OCI-LY7 (cell line): ENCODE measurements at regions of chr5 and their contacts with region 1.

Region 1: GRCh38 chr5:119383008-119383407 is 27.2 kb downstream of the TNFAIP8 start:
- DNase-seq: no peak
- H3K4me3 ChIP-seq: no peak overlapping the region
- H3K27ac ChIP-seq: no peak overlapping the region
- H3K4me1 ChIP-seq: peaks cover 44% of the 10 kb centered on the region
- CTCF ChIP-seq: no peak

Region 2: DNA sequence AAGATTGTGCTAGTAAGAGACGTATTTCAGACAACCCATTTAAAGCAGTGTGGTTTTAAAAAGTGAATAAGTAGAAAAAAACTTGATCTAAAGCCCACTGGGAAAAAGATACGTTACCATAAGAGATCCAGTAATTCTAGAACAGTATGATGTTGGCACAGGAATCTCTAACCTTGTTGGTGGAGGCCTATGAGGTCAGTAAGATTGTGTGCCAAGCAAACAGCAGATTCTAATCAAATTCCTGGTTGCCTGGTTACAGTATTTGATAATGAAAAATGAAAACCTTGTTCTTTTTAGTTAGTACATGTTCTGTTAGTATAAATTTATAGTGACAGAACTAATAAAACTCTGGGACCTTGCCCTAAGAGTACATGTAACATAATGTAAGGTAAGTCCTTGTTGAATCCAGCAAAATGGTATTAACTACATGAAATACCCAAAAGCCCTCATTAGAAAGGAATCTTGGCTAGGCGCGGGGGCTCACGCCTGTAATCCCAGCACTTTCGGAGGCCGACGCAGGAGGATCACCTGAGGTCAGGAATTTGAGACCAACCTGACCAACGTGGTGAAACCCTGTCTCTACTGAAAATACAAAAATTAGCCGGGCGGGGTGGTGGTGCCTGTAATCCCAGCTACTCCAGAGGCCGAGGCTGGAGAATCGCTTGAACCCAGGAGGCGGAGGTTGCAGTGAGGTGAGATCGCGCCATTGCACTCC is 345.4 kb before region 1 on chr5:
- CTCF ChIA-PET with region 1: no interaction called
- POLR2A ChIA-PET with region 1: no interaction called
- intact Hi-C with region 1: no loop called
- DNase-seq: no peak
- H3K4me3 ChIP-seq: no peak overlapping the region
- H3K27ac ChIP-seq: no peak overlapping the region
- H3K4me1 ChIP-seq: peaks cover 15% of the 10 kb centered on the region
- CTCF ChIP-seq: no peak

Region 3: GRCh38 chr5:119309326-119309725 is 73.7 kb before region 1 on chr5:
- CTCF ChIA-PET with region 1: no interaction called
- POLR2A ChIA-PET with region 1: no interaction called
- intact Hi-C with region 1: no loop called
- DNase-seq: peak; percentile 79
- H3K4me3 ChIP-seq: peak overlapping the region; percentile 54
- H3K27ac ChIP-seq: peak overlapping the region; percentile 95
- H3K4me1 ChIP-seq: peaks cover 98% of the 10 kb centered on the region
- CTCF ChIP-seq: no peak

Region 4: DNA sequence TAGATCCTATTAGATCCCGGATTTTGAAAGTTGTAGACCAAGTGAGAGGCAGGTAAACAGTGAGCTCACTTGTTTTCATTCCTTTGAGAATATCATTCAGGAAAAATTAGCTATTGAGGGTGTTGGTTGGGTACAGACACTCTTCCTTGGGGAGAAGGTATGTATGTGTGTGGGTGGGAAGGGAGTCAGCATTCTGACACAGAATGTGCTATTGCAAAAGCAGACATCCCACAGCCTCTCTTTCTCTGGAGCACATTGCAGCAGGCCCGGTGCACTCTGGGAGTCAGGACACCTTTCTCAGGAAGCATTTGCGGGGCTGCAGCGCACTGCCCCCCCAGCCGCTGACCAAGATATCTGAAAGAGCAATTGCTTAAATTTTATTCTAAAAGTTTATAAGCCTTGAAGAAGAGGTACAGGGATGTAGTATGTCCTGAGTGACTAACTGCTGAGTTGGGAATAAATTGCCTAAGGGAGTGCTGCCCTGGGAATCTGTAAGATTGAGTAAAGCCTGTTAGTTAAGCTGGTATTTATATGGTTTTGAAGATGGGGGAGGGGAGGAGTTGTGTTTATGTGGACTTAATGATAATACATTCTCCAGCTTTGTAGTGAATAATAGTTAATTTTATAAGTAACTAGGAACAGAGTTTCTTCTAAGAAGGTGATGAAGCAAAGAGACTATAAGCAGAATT is 22.0 kb before region 1 on chr5:
- CTCF ChIA-PET with region 1: interaction called, 3 read pairs
- POLR2A ChIA-PET with region 1: interaction called, 13 read pairs
- intact Hi-C with region 1: no loop called
- DNase-seq: no peak
- H3K4me3 ChIP-seq: no peak overlapping the region
- H3K27ac ChIP-seq: no peak overlapping the region
- H3K4me1 ChIP-seq: peaks cover 63% of the 10 kb centered on the region
- CTCF ChIP-seq: no peak

Region 5: DNA sequence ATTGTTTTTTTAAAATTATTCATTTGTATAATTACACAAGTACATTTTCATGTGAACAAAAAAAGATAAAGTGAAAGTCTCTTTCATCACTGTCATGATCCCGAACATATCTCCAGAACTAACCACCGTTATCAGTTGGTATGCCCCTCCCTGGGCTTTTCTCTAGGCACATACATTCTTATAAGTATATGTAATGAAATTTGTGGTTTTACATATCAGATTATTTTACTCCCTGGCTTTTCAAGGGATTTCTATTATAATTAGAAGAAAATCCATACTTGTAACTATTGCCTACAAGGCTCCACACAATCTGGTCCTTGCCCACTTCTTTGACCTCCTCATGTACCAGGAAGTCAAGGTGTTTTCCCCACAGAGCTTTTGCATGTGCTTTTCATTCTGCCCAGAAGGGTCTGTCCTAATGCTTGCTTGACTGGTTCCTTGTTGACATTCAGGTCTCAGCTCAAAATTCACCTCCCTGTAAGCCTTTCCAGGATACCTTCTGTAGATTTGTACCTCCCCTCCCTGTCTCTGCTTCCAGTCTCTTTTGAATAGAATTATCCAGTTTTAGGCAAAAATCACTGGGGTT is 35.6 kb after region 1 on chr5:
- CTCF ChIA-PET with region 1: no interaction called
- POLR2A ChIA-PET with region 1: no interaction called
- intact Hi-C with region 1: no loop called
- DNase-seq: peak; percentile 37
- H3K4me3 ChIP-seq: no peak overlapping the region
- H3K27ac ChIP-seq: no peak overlapping the region
- H3K4me1 ChIP-seq: peaks cover 13% of the 10 kb centered on the region
- CTCF ChIP-seq: no peak

Region 6: DNA sequence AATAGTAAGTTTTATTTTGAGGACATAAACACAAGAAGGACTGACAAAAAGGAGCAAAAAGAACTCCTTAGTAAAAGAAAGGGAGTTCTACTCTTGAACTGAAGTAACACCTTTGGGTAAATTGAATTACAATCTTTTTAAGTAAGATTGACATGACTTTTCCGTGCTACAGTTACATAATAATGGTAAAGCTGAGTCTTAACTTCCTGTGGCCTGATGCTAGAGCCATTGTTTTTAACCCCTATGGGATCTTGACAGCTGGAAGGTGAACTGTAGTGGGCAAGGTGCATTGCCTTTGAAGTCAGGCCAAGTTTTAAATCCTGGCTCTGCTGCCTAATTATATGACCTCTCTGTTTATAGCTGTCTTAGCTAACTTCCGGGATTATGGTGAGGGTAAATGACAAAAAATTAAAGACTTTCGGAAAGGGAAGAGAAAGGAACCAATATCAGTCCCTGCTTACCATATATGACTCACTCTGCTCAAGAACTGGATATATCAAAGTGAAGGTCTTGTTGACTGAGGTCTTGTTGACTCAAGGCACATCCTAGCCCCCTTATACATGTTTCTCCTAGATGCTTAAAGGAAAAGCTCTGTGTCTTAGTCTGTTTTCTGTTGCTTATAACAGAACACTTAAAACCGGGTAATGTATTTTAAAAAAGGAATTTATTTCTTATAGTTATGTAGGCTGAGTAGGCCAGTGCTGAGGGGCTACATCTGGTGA is 76.1 kb after region 1 on chr5:
- CTCF ChIA-PET with region 1: no interaction called
- POLR2A ChIA-PET with region 1: no interaction called
- intact Hi-C with region 1: no loop called
- DNase-seq: peak; percentile 30
- H3K4me3 ChIP-seq: no peak overlapping the region
- H3K27ac ChIP-seq: no peak overlapping the region
- H3K4me1 ChIP-seq: peaks cover 11% of the 10 kb centered on the region
- CTCF ChIP-seq: no peak